HepG2 (cell line): ENCODE measurements at regions of chr3 and their contacts with region 1.

Region 1: GRCh38 chr3:146577662-146578061 is 27.5 kb downstream of the PLSCR5 start:
- DNase-seq: peak; percentile 39
- ATAC-seq: no peak
- H3K4me3 ChIP-seq: no peak overlapping the region
- H3K27ac ChIP-seq: no peak overlapping the region
- H3K4me1 ChIP-seq: peaks cover 31% of the 10 kb centered on the region
- H3K27me3 ChIP-seq: no peaks in the 10 kb centered on the region
- CTCF ChIP-seq: peak; percentile 59
- EP300 ChIP-seq: no peak
- POLR2A ChIP-seq: no peak
- RAD21 ChIP-seq: no peak

Region 2: DNA sequence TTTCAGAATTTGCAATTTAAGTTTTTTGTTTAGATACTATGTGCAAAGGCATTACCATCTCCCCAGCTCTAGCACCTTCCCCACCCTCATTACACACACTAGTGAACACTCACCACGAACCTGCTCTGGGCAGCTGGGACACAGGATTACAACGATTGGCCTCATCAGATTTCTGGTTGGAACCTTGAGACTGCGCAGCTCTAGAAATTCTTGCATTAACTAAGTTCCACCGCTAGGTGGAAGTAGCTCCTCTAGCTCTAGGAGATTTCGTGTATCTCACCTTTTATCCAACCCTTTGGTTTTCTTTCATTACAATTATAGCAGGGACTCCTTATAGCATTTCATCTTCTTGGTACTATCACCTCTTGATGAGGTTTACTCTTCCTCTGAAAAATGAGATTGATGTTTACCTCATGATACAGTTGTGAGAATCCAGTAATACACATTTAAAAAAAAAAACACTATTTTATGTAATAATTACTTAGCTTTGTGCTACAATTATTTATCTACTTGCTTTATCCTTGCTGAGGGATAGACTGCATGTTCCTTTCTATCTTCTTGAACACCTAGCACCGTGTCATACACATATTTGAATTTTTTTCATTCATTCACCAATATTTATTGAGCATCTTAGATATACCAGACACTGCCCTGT is 388.0 kb before region 1 on chr3:
- CTCF ChIA-PET with region 1: interaction called, 8 read pairs
- POLR2A ChIA-PET with region 1: no interaction called
- in situ Hi-C with region 1: no loop called
- intact Hi-C with region 1: loop called (anchors 1 kb)
- DNase-seq: peak; percentile 49
- ATAC-seq: peak; percentile 94
- H3K4me3 ChIP-seq: no peak overlapping the region
- H3K27ac ChIP-seq: no peak overlapping the region
- H3K4me1 ChIP-seq: no peaks in the 10 kb centered on the region
- H3K27me3 ChIP-seq: no peaks in the 10 kb centered on the region
- CTCF ChIP-seq: peak; percentile 80
- EP300 ChIP-seq: no peak
- POLR2A ChIP-seq: no peak
- RAD21 ChIP-seq: peak; percentile 56

Region 3: GRCh38 chr3:146326670-146327543 is 250.8 kb before region 1 on chr3:
- CTCF ChIA-PET with region 1: interaction called, 5 read pairs
- POLR2A ChIA-PET with region 1: interaction called, 4 read pairs
- in situ Hi-C with region 1: loop called (anchors 10 kb)
- intact Hi-C with region 1: loop called (anchors 2 kb)
- DNase-seq: peak; percentile 46
- ATAC-seq: peak; percentile 92
- H3K4me3 ChIP-seq: no peak overlapping the region
- H3K27ac ChIP-seq: no peak overlapping the region
- H3K4me1 ChIP-seq: peaks cover 10% of the 10 kb centered on the region; the same call in 1 of the 2 replicates
- H3K27me3 ChIP-seq: no peaks in the 10 kb centered on the region; a peak in 1 of 5 replicates
- CTCF ChIP-seq: peak; percentile 77
- EP300 ChIP-seq: no peak
- POLR2A ChIP-seq: no peak
- RAD21 ChIP-seq: peak; percentile 67

Region 4: DNA sequence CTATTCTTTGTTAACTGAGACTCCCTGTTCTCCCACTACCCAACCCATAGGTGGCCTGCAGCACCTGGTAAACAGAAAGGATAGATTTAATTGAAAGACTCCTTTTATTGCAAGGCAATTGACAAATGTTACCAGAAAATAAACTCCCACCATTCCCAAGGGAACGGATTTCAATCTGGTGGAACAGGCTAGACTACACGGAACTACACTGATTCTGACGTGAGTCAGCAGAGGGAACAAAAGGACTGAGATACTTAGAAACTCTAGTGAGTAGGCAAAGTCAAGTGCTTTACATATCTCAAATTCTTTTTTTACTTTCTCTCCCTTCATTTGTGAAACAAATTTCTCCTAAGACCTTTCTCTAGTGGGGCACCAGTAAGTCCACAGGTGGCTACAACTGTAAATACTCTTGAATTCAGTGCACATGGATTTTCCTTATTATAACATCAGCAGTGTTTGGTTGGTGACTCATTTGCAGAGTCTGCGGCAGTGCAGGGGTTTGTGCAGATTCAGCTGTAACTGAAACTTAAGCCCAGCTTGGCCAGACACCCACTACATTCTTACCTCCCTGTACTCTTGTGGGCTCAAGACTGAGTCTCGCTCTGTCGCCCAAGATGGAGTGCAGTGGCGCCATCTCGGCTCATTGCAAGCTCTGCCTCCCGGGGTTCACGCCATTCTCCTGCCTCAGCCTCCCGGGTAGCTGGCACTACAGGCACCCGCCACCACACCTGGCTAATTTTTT is 74.0 kb before region 1 on chr3:
- CTCF ChIA-PET with region 1: no interaction called
- POLR2A ChIA-PET with region 1: no interaction called
- in situ Hi-C with region 1: no loop called
- intact Hi-C with region 1: loop called (anchors 5 kb)
- DNase-seq: peak; percentile 25
- ATAC-seq: peak; percentile 81
- H3K4me3 ChIP-seq: no peak overlapping the region
- H3K27ac ChIP-seq: no peak overlapping the region
- H3K4me1 ChIP-seq: peaks cover 11% of the 10 kb centered on the region
- H3K27me3 ChIP-seq: no peaks in the 10 kb centered on the region
- CTCF ChIP-seq: no peak
- EP300 ChIP-seq: no peak
- POLR2A ChIP-seq: no peak
- RAD21 ChIP-seq: no peak

Region 5: GRCh38 chr3:146640955-146641867 is 63.5 kb after region 1 on chr3:
- CTCF ChIA-PET with region 1: interaction called, 3 read pairs
- POLR2A ChIA-PET with region 1: interaction called, 10 read pairs
- in situ Hi-C with region 1: no loop called
- intact Hi-C with region 1: loop called (anchors 2 kb)
- DNase-seq: peak; percentile 56
- ATAC-seq: peak; percentile 64
- H3K4me3 ChIP-seq: no peak overlapping the region
- H3K27ac ChIP-seq: no peak overlapping the region
- H3K4me1 ChIP-seq: peaks cover 29% of the 10 kb centered on the region
- H3K27me3 ChIP-seq: no peaks in the 10 kb centered on the region
- CTCF ChIP-seq: peak; percentile 79
- EP300 ChIP-seq: no peak
- POLR2A ChIP-seq: no peak
- RAD21 ChIP-seq: peak; percentile 62